Head of caudate nucleus (tissue), 42 donors: ENCODE measurements at regions of chr4 and their contacts with region 1.

Region 1: DNA sequence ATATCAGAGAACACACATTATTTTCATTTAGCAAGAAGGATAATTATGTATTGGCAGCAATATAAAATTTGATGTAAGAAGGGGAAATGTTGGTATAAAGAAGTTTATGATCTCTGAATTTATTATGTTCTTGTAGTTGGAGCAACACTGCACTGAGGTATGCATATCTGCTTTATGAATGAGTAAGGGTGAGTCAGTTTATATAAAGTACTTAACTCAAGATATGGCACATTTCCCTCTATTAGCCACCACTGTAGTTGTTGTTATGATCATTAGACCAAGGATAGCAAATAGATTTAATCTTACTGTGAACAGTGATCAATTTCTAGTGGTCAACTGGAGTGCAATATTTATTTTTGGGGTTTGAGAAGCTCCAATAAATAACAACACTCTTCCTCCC is 66.6 kb downstream of the SNX25 start:
- DNase-seq: no peak

Region 2: DNA sequence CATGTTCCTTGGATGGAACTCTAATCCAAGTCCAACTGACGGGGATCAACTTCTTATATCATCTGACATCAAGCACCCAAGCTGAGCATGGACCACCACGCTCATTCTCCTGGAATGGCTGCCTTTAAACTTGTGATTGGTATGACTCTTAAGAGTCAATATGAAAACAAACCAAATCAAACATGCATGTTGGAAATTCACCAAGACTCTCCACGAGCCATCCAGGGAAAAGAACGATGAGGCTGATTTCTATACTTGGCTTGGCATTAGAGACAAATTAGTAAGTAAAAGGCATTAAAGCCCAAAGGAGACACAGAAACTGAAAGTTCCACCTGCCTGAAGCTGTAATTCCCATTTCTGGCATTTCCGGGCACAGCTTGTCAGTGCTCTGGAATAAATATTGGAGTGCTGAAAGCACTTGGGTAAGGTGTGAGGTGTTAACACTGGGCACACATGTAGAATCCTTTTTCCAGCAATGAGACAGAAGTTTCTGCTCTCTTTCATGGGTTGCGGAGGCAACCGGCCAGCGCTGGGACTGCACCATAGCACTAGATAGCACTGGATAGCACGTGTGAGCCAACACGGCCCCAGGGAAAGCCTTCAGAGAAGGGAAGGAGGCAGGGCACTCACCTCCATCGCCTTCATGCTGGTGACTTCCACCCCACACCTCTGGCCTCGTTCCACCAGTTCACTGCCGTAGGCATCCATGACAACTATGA is 500.0 kb before region 1 on chr4:
- intact Hi-C with region 1: no loop called
- DNase-seq: no peak

Region 3: DNA sequence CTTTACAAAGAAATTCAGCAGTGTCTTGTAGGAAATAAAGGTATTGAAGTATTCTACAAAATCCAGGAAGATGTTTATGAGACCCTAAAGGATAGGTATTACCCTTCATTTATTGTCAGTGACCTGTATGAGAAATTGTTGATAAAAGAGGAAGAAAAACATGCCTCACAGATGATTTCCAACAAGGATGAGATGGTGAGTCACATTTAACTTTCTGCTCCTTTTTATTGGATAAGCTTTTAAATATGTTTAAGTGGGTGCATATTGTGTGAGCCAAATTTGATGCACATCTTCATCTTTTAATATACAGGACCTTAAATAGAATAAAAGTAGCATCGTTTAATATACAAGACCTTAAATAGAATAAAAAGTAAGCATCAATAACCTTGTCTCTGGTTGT is 47.6 kb after region 1 on chr4:
- intact Hi-C with region 1: loop called (anchors 5 kb)
- DNase-seq: no peak